Activated CD4-positive, alpha-beta T cell treated with anti-CD3 and anti-CD28 coated beads for 36 hours (primary cell): ENCODE measurements at regions of chr7 and their contacts with region 1.

Region 1: GRCh38 chr7:39732837-39733804 is 109.7 kb downstream of the RALA start:
- DNase-seq: peak; percentile 99
- ATAC-seq: peak; percentile 93
- H3K4me3 Mint-ChIP-seq: peak overlapping the region; percentile 88
- H3K27ac Mint-ChIP-seq: peak overlapping the region; percentile 93
- H3K4me1 Mint-ChIP-seq: peaks cover 31% of the 10 kb centered on the region
- H3K27me3 Mint-ChIP-seq: no peaks in the 10 kb centered on the region

Region 2: GRCh38 chr7:38178004-38178694 is 1555.0 kb before region 1 on chr7 and contains the start of gene STARD3NL:
- CTCF ChIA-PET with region 1: no interaction called
- POLR2A ChIA-PET with region 1: no interaction called
- intact Hi-C with region 1: loop called in 1 of 2 experiments (anchors 10 kb)
- DNase-seq: peak; percentile 92
- ATAC-seq: peak; percentile 100
- H3K4me3 Mint-ChIP-seq: peak within 1 kb of the TSS; percentile 95
- H3K27ac Mint-ChIP-seq: peak within 1 kb of the TSS; percentile 93
- H3K4me1 Mint-ChIP-seq: peaks cover 37% of the 10 kb centered on the region
- H3K27me3 Mint-ChIP-seq: peaks cover 10% of the 10 kb centered on the region
- total RNA-seq, gene STARD3NL: 27.9 to 30.8 TPM

Region 3: GRCh38 chr7:39465055-39465929 is 267.8 kb before region 1 on chr7:
- CTCF ChIA-PET with region 1: no interaction called
- POLR2A ChIA-PET with region 1: no interaction called
- intact Hi-C with region 1: no loop called
- DNase-seq: peak; percentile 68
- ATAC-seq: peak; percentile 86
- H3K4me3 Mint-ChIP-seq: no peak overlapping the region
- H3K27ac Mint-ChIP-seq: no peak overlapping the region
- H3K4me1 Mint-ChIP-seq: peaks cover 2% of the 10 kb centered on the region
- H3K27me3 Mint-ChIP-seq: peaks cover 7% of the 10 kb centered on the region

Region 4: DNA sequence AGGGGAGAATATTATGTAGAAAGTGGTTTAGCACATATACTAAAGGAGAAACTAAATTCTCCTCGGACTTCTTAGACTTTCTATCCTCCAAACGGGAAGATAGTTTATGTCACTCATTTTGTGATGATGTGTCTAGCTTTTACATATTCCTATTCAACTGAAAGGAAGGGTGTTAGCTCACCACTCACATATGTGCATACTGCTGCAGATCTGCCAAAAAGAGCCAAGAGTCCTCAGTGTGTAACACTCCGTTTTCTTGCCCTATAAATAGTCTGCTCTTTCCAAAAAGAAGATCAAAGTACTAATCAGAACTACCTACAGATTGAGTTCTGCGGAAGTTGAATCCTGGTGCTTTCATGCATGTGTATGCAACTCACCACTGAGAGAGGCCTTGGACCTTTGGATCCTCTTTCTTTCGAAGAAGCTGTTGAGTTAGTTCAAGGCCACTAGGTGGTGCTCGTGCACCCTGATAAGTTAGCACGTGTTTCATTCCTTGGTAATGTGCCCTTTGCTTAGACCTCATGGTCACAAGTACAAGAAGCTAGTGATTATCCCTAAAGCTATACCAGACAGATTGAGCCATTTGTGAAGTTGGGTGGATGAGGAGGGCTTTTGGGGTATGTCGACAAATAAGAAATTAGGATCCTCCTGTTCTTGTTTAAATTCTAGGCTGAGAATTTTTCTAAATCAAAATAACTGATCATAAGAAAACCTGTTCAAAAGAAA is 152.8 kb before region 1 on chr7:
- CTCF ChIA-PET with region 1: interaction called, 388 read pairs
- POLR2A ChIA-PET with region 1: no interaction called
- intact Hi-C with region 1: no loop called
- DNase-seq: peak; percentile 85
- ATAC-seq: peak; percentile 94
- H3K4me3 Mint-ChIP-seq: no peak overlapping the region
- H3K27ac Mint-ChIP-seq: peak overlapping the region; percentile 72
- H3K4me1 Mint-ChIP-seq: peaks cover 11% of the 10 kb centered on the region
- H3K27me3 Mint-ChIP-seq: no peaks in the 10 kb centered on the region

Region 5: DNA sequence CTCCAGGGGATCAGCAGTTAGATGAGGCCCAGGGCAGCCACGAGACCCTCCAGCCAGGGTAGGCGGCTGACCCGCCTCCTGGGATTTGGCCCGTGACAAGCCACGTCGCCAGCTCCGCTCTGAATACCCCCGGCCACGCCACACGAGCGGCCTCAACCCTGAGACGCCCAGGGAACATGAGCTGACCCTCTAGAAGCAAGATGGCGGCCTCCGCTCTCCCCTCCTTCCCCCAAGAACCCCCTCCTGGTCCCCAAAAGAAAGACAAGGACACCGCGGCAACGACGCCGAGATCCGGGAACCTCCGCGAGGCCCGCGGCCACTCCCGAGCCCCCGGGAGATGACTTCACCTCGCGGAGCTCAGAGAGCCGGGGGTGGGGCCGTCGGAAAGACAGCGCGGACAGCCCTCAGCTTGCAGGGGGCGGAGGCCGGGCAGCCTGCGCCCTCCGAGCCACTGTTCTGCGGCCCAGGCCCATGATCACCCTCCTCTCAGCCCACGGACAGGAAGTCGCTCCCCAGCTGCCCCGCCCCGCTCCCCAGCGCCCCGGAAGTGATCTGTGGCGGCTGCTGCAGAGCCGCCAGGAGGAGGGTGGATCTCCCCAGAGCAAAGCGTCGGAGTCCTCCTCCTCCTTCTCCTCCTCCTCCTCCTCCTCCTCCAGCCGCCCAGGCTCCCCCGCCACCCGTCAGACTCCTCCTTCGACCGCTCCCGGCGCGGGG is 109.9 kb before region 1 on chr7 and contains the start of gene RALA:
- CTCF ChIA-PET with region 1: no interaction called
- POLR2A ChIA-PET with region 1: interaction called, 4 read pairs
- intact Hi-C with region 1: loop called (anchors 1 kb)
- DNase-seq: peak; percentile 95
- ATAC-seq: peak; percentile 95
- H3K4me3 Mint-ChIP-seq: peak within 1 kb of the TSS; percentile 87
- H3K27ac Mint-ChIP-seq: peak within 1 kb of the TSS; percentile 91
- H3K4me1 Mint-ChIP-seq: peaks cover 43% of the 10 kb centered on the region
- H3K27me3 Mint-ChIP-seq: no peaks in the 10 kb centered on the region
- total RNA-seq, gene RALA: 30.7 to 33.7 TPM

Region 6: DNA sequence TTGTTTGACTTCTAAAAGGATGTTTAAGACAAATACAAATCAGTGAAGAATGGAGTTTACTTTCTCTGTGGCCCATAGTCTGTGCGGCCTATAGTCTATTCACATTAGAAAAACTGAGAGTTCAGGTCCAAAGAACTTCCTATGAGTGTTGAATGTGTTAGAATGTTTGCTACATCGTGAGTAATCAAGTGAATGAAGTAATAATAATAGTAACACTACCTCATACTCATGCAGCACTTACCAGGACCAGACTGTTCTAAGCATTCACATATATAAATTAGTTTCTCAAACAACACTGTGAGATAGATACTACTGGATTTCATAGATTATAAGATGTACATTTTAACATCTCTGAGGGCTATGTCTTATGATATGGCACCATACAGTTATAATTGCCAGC is 39.3 kb before region 1 on chr7:
- CTCF ChIA-PET with region 1: no interaction called
- POLR2A ChIA-PET with region 1: no interaction called
- intact Hi-C with region 1: loop called in 1 of 2 experiments (anchors 5 kb)
- DNase-seq: no peak
- ATAC-seq: peak; percentile 51
- H3K4me3 Mint-ChIP-seq: no peak overlapping the region
- H3K27ac Mint-ChIP-seq: no peak overlapping the region
- H3K4me1 Mint-ChIP-seq: peaks cover 15% of the 10 kb centered on the region
- H3K27me3 Mint-ChIP-seq: no peaks in the 10 kb centered on the region

Region 7: DNA sequence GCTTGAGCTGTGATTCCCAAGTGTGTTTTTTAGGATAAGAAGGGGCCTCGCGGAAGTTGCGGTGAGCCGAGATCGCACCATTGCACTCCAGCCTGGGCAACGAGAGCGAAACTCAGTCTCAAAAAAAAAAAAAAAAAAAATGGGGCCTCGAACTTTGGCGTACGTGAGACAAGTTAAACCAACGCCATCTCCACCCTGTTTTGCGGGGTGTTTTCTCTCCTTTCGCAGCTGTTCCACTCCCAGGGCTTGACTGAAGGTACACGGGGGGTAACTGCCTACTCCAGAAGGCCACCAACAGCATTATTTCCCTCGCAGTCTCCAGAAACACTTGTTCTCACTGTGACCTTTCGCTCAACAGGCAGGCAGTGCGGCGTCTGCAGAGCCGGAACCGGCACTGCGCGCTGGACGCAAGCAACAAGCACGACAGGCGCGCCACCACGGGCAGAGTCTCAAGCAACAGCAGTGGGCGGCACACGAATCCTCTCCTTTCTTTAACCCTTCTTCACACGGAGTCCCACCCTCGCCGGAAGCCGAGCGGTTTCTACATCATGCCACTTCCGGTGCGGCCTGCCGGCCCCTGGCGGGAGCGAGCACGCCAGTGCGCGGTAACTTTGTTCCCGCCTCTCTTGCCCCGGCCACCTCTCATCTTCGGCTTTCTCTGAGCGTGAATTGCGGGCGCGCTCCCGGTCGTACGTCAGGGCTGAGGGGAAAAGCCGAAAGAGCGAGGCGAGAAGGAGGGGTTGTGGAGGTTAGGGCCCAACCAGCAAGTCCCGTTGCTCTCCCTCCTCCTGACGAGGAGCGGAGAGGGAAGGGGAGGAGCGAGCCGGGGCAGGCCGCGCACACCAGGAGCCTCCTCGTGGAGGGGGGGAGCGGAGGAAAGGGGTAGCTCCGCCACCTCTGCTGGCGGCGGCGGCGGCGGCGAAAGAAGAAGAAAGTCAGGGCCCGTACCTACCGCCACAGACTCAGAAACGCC is 216.1 kb after region 1 on chr7:
- CTCF ChIA-PET with region 1: interaction called, 4 read pairs
- POLR2A ChIA-PET with region 1: no interaction called
- intact Hi-C with region 1: loop called (anchors 1 to 5 kb)
- DNase-seq: peak; percentile 99
- ATAC-seq: peak; percentile 82
- H3K4me3 Mint-ChIP-seq: peak overlapping the region; percentile 93
- H3K27ac Mint-ChIP-seq: peak overlapping the region; percentile 98
- H3K4me1 Mint-ChIP-seq: peaks cover 25% of the 10 kb centered on the region
- H3K27me3 Mint-ChIP-seq: no peaks in the 10 kb centered on the region